Aorta (tissue), 5 donors: ENCODE measurements at regions of chr19 and their contacts with region 1.

Region 1: DNA sequence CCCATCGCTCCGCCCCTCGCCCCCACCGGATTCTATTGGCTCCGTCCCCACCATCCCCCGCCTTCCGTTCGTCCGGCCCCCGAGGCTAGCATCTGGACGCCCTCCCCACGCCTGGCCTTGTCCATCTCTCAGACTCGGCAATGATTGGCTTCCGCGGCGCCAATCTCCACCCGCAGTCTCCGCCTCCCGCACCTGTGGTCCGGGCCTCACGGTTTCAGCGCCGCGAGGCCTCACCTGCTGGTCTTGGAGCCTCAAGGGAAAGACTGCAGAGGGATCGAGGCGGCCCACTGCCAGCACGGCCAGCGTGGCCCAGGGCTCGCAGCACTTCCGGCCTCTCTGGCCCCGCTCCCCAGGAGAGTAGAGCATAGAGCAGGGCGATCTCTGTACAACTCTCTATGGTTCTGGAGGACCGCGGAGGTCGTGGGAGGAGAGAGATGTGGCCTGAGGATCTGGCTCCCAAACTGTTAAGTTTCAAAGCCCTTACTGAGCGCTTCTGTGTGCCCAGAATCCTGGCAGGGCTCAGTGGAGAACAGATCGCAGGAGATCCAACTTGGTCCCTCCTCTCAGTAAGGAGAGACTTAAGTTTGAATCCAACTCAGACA is at the start of gene ERCC1:
- DNase-seq: peak; percentile 96 to 99
- ATAC-seq: peak; percentile 88
- H3K4me3 ChIP-seq: peak within 1 kb of the TSS; percentile 6 to 33
- H3K27ac ChIP-seq: peak within 1 kb of the TSS; percentile 5 to 76
- H3K4me1 ChIP-seq: no peaks in the 10 kb centered on the region
- H3K27me3 ChIP-seq: no peaks in the 10 kb centered on the region
- total RNA-seq, gene ERCC1: 61.4 to 69.9 TPM

Region 2: GRCh38 chr19:45405435-45406225 is 18.1 kb before region 1 on chr19:
- intact Hi-C with region 1: loop called in 1 of 2 experiments (anchors 1 kb)
- DNase-seq: peak; percentile 95 to 96
- ATAC-seq: peak; percentile 92
- H3K4me3 ChIP-seq: peak overlapping the region; percentile 48 to 61
- H3K27ac ChIP-seq: peak overlapping the region; percentile 64 to 87
- H3K4me1 ChIP-seq: peaks cover 0 to 4% of the 10 kb centered on the region in 2 donors
- H3K27me3 ChIP-seq: no peaks in the 10 kb centered on the region

Region 3: DNA sequence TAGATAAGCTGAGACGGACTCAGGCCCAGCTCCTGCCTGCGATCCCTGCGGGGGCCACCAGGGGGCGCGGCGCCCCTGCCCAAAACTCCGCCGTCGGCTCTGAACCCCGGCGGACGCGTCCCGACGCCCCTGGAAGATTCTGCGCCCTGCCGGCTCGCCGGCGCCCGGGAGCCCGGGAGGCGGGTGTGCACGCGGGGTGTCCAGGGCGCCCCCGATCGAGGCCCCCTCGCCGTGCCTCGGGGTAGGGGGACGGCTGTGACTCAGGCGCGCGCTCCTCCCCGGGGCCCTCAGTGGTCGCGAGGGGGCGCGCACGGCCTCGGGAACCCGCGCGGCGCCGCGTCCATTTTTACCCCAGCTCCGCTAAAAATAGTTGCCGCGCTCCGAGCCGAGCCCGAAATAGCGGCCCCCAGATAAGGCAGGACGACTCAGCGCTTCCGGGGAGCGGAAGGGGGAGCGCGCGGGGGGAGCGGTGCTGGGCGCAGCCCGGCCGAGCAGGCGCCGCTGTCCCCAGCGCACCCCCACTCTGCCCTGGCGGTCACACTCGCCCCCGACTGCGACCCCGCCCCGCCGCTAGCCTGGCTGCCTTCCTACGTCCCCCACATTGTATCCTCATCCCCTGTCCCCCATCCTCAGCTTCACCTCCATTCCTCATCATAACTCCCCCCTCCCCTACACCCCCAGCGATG is 16.0 kb after region 1 on chr19:
- intact Hi-C with region 1: loop called in 1 of 2 experiments (anchors 1 kb)
- DNase-seq: peak; percentile 92 to 97
- ATAC-seq: peak; percentile 76
- H3K4me3 ChIP-seq: peak overlapping the region; percentile 31 to 46
- H3K27ac ChIP-seq: peak overlapping the region in 1 of 2 donors; percentile 87
- H3K4me1 ChIP-seq: no peaks in the 10 kb centered on the region
- H3K27me3 ChIP-seq: no peaks in the 10 kb centered on the region

Region 4: DNA sequence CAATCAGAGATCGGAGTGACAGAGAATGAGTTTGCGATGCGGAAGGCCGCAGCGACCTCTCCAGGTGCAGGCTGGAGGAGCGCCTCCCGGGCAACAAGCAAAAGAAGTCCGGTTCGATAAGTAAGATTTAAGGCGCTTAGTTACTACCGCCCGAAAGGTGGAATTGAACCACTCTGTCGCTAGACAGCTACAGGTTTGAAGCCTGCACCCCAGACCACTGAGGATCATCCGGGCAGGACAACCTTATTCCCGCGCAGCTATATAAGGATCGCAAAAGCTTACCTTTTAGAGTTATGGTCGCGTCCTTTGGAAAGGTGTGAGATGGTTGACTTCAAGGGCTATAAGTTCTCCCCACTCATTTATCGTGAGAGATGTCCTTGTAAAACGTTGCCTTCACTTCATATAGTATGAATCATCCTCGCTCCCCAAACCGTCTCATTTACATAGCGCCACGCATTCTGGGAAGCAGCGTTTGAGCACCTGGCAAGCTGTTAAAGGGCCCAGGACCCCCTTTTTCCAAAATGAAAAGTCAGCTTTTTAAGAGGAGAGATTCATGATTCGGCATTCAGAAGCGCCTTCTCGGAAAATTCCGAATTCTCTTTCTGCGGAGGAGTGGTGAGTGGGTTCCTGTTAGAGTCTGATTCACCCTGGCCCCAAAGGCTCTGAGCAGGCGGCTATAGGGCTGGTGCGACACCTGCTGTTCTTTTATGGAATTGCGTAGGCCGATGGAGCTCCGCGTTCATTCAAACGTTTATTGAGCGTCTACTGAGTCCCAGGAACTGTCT is 55.0 kb after region 1 on chr19:
- intact Hi-C with region 1: loop called (anchors 2 kb)
- DNase-seq: peak; percentile 89 to 94
- ATAC-seq: peak; percentile 87
- H3K4me3 ChIP-seq: peak overlapping the region; percentile 18 to 21
- H3K27ac ChIP-seq: peak overlapping the region; percentile 3 to 90
- H3K4me1 ChIP-seq: peaks cover 0 to 2% of the 10 kb centered on the region in 2 donors
- H3K27me3 ChIP-seq: no peaks in the 10 kb centered on the region

Region 5: GRCh38 chr19:45770192-45771101 is 346.8 kb after region 1 on chr19:
- intact Hi-C with region 1: no loop called
- DNase-seq: peak; percentile 97
- ATAC-seq: peak; percentile 90
- H3K4me3 ChIP-seq: peak overlapping the region; percentile 0 to 18
- H3K27ac ChIP-seq: peak overlapping the region in 1 of 2 donors; percentile 56
- H3K4me1 ChIP-seq: no peaks in the 10 kb centered on the region
- H3K27me3 ChIP-seq: no peaks in the 10 kb centered on the region